ENCODE measurements at regions of chr15 and their contacts with region 1.

Region 1: DNA sequence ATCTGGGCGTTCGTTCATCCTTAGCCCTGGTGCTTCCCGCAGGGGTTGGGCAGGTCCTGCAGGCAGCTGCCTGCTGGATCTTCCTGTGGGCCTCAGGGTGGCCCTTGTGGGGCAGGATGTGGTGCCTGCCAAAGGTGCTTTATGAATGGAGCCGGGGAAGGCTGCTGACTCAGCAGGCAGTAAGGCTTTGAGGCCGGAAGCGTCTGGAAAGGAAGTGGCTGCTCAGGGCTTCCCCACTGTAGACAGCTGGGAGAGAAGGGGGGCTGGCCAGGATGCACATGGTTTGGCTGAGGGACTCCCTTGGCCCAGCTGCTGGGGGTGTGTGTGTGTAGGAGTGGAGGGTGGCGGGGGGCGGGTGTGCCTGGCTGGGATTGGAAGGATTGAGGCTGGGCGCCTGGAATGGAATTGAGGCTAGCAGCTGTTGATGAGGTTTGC is 12.9 kb downstream of the CD276 start:
- DNase-seq: peak; percentile 74 to 91 (median 78)
- H3K4me3 ChIP-seq: no peak overlapping the region
- H3K4me3 Mint-ChIP-seq: peak overlapping the region; percentile 18 to 77 (median 49)
- H3K27ac ChIP-seq: no peak overlapping the region
- H3K27ac Mint-ChIP-seq: peak overlapping the region in 6 of 7 donors; percentile 13 to 93 (median 58)
- H3K4me1 ChIP-seq: peaks cover 24% of the 10 kb centered on the region
- H3K4me1 Mint-ChIP-seq: peaks cover 20 to 35% (median 21%) of the 10 kb centered on the region in 4 donors
- H3K27me3 ChIP-seq: no peaks in the 10 kb centered on the region
- H3K27me3 Mint-ChIP-seq: peaks cover 22 to 43% of the 10 kb centered on the region in 2 donors

Region 2: GRCh38 chr15:73305331-73306211 is 391.5 kb before region 1 on chr15:
- CTCF ChIA-PET with region 1: no interaction called
- POLR2A ChIA-PET with region 1: no interaction called
- intact Hi-C with region 1: loop called (anchors 10 kb)
- DNase-seq: peak in 3 of 5 donors; percentile 9 to 18 (median 12)
- H3K4me3 ChIP-seq: no peak overlapping the region
- H3K4me3 Mint-ChIP-seq: no peak overlapping the region
- H3K27ac ChIP-seq: no peak overlapping the region
- H3K27ac Mint-ChIP-seq: peak overlapping the region in 1 of 7 donors; percentile 30
- H3K4me1 ChIP-seq: no peaks in the 10 kb centered on the region
- H3K4me1 Mint-ChIP-seq: no peaks in the 10 kb centered on the region
- H3K27me3 ChIP-seq: no peaks in the 10 kb centered on the region
- H3K27me3 Mint-ChIP-seq: no peaks in the 10 kb centered on the region

Region 3: DNA sequence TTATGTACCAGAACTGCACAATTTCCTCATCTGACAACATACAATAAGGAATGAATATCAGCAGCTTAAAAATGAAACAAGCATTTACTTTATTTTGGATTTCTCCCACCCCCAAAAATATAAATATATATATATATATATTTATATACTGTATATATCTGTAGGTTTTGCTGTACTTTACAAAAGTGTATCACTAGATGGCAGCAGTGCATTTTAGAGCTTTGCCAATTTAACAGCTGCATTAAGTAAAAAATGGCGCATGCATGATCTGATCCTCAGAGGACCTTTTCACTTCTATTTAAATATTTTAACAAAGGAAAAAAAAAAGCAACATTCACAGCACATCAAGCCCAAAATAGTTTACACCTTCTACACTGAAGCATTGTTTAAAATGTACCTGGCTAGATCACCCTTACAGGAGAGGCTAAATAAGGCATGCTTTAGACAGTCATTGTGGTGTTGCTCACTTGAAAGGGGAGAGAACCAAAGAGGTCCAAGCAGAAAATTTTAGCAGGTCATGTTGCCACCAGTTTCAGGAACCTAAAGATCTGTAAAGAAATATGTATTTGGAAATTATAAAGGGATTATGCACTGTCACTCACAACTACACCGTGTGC is 136.4 kb before region 1 on chr15:
- CTCF ChIA-PET with region 1: interaction called, 12 read pairs
- POLR2A ChIA-PET with region 1: no interaction called
- intact Hi-C with region 1: loop called (anchors 1 kb)
- DNase-seq: peak; percentile 18 to 39 (median 35)
- H3K4me3 ChIP-seq: no peak overlapping the region
- H3K4me3 Mint-ChIP-seq: no peak overlapping the region
- H3K27ac ChIP-seq: no peak overlapping the region
- H3K27ac Mint-ChIP-seq: no peak overlapping the region
- H3K4me1 ChIP-seq: no peaks in the 10 kb centered on the region
- H3K4me1 Mint-ChIP-seq: no peaks in the 10 kb centered on the region
- H3K27me3 ChIP-seq: no peaks in the 10 kb centered on the region
- H3K27me3 Mint-ChIP-seq: no peaks in the 10 kb centered on the region